Testis (tissue), 5 donors: ENCODE measurements at regions of chr7 and their contacts with region 1.

Region 1: DNA sequence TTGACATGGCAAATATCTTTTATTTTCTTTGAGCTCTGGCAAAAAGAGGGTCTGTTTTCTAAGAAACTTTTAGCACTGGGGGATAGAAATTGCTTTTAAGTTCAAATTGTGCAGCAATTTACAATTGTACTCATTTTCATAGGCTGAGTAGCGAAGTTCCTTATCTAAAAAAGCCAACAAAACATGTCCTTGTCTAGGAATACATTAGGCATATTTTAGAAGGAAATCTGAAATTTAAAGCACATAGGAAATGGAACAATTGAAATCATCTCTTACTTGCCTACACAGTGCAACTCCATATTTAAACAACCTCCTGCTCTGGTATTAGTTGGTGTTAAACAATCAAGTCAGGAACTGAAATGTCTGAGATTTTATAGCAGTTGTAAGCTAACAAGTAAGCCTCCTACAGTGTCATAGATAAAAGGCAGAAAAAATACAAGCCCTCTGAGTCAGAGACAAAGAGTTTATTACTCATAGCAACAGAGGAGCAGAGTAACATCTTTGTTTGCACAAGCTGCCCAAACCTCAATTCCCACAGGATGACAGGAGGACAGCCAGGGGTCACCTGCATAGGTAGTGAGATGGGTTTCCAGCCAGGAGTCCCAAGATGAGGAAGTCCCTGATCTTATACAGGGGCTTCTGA is 280.2 kb upstream of the HGF start:
- DNase-seq: no peak
- H3K4me3 ChIP-seq: no peak overlapping the region
- H3K27ac ChIP-seq: no peak overlapping the region
- H3K4me1 ChIP-seq: no peaks in the 10 kb centered on the region
- H3K27me3 ChIP-seq: no peaks in the 10 kb centered on the region
- CTCF ChIP-seq: no peak
- POLR2A ChIP-seq: no peak

Region 2: GRCh38 chr7:82572195-82572880 is 522.3 kb after region 1 on chr7:
- intact Hi-C with region 1: loop called (anchors 10 kb)
- DNase-seq: peak; percentile 95
- H3K4me3 ChIP-seq: no peak overlapping the region
- H3K27ac ChIP-seq: no peak overlapping the region
- H3K4me1 ChIP-seq: peaks cover 8% of the 10 kb centered on the region
- H3K27me3 ChIP-seq: no peaks in the 10 kb centered on the region
- CTCF ChIP-seq: peak; percentile 69 to 94 (median 88)
- POLR2A ChIP-seq: no peak